ENCODE measurements at regions of chr21 and their contacts with region 1.

Region 1: DNA sequence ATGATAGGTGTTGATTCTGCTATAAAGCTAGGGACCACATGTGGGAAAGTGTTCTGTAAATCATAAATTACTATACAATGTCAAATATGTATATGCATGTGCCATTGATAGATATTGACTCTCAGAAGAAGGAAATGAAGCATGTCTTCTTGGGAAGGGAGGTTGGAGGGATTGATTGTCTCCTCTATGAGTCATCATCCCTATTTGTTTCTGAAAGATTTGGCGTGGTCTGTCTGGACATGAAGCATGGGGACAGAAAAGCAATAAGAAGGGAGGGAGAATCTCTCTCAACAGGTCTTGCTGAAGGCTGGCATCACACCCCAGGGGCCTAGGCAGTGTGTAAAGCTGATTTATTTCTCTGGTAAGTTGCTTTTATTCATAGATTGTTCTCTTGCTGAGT is 98.0 kb upstream of the KCNJ6 start:
- DNase-seq: no peak

Region 2: GRCh38 chr21:37956772-37957171 is 57.5 kb before region 1 on chr21:
- intact Hi-C with region 1: loop called in 1 of 2 experiments (anchors 2 kb)
- DNase-seq: no peak

Region 3: GRCh38 chr21:39527664-39528381 is 1513.5 kb after region 1 on chr21:
- intact Hi-C with region 1: no loop called
- DNase-seq: no peak